ENCODE measurements at regions of chr10 and their contacts with region 1.

Region 1: DNA sequence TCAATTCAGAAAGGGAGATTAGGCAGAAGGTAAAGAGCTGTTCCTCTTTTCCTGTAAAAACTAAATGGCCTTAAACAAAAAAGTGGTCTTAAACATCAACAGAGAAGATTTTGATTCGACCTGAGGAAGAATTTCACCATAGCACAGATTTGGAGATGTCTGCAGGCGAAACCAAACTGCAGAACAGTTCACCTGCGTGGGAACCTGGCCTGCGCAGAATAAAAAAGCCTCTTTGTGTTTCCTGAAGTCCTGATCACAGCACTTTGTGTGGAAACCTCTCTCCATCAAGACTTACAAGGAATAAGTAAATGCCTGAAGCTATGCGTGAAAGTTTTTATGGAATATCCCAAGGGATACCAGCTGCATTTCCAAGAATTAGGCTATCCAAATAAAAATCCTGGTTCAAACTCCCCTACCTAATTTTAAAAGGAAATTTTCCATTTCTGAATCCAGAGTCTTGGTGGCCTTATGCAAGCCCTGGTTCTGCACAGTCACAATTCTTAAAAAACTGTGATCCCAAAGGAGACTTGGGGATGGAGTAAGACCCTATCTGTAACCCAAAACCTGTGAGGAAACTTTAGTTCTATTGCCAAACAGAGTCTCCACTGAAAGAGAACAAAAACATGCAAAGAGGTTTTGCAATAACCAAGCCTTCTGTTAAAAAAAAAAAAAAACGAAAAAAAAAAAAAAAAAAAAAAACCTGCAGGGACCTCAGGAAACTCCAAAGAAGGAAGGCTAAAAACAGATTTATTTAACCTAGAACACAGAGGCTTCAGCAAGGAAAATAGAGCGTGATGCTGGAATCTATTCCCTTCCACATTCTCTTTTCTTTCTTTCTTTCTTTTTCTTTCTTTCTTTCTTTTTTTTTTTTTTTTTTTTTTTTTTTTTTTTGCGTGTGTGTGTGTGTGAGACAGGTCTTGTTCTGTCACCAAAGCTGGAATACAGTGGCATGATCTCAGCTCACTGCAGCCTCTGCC is 10.4 kb downstream of the CALML3 start:
- DNase-seq: peak in 1 of 2 donors; percentile 66
- H3K4me3 ChIP-seq: no peak overlapping the region
- H3K27ac ChIP-seq: peak overlapping the region; percentile 86 to 87
- H3K4me1 ChIP-seq: peaks cover 10 to 65% of the 10 kb centered on the region in 2 donors
- H3K27me3 ChIP-seq: no peaks in the 10 kb centered on the region
- CTCF ChIP-seq: no peak

Region 2: DNA sequence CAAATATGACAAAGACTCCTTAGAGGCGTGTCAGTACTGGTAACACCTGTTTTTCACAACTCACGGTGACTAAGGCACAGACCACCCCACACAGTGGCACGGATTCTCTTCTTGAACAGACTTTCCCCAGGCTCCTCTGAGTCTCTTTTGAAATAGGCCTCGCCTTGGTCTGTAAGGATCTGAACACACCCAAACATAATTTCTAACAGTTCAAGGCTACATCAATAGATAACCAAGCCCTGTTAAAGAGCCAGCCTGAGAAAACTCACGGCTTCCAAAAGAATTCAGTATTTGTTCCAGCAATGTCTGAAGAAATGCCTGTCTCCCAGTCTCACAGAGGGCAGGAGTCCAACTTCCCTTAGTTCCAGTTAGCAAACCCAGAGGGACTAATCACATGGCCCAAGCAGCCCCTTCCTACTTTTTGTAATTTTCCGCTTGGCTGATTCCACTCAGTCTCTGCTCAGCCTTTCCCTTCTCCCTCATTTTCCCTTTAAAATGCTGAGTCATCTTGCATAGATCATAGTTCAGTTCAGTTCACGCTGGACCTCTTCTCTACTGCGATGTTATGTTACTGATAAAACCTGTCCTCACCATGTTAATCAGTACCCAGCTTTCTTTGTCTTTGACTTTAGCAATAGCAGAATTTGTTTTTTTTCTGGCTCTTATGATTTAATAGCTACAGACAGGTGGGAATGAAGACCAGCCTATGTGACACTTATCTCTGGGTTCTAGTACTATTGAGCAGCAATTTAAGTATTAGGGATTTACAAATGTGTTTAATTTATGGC is 463.6 kb before region 1 on chr10:
- intact Hi-C with region 1: loop called (anchors 10 kb)
- DNase-seq: peak; percentile 28 to 93
- H3K4me3 ChIP-seq: peak overlapping the region in 1 of 2 donors; percentile 24
- H3K27ac ChIP-seq: peak overlapping the region; percentile 90 to 93
- H3K4me1 ChIP-seq: peaks cover 8 to 23% of the 10 kb centered on the region in 2 donors
- H3K27me3 ChIP-seq: no peaks in the 10 kb centered on the region
- CTCF ChIP-seq: no peak

Region 3: GRCh38 chr10:5466418-5467154 is 68.6 kb before region 1 on chr10:
- intact Hi-C with region 1: loop called (anchors 5 kb)
- DNase-seq: no peak
- H3K4me3 ChIP-seq: no peak overlapping the region
- H3K27ac ChIP-seq: peak overlapping the region; percentile 71
- H3K4me1 ChIP-seq: peaks cover 0 to 16% of the 10 kb centered on the region in 2 donors
- H3K27me3 ChIP-seq: no peaks in the 10 kb centered on the region
- CTCF ChIP-seq: no peak

Region 4: GRCh38 chr10:5559642-5560141 is 24.5 kb after region 1 on chr10:
- intact Hi-C with region 1: loop called (anchors 2 kb)
- DNase-seq: peak in 1 of 2 donors; percentile 69
- H3K4me3 ChIP-seq: peak overlapping the region in 1 of 2 donors; percentile 20
- H3K27ac ChIP-seq: peak overlapping the region; percentile 82 to 91
- H3K4me1 ChIP-seq: peaks cover 35 to 72% of the 10 kb centered on the region in 2 donors
- H3K27me3 ChIP-seq: no peaks in the 10 kb centered on the region
- CTCF ChIP-seq: no peak

Region 5: DNA sequence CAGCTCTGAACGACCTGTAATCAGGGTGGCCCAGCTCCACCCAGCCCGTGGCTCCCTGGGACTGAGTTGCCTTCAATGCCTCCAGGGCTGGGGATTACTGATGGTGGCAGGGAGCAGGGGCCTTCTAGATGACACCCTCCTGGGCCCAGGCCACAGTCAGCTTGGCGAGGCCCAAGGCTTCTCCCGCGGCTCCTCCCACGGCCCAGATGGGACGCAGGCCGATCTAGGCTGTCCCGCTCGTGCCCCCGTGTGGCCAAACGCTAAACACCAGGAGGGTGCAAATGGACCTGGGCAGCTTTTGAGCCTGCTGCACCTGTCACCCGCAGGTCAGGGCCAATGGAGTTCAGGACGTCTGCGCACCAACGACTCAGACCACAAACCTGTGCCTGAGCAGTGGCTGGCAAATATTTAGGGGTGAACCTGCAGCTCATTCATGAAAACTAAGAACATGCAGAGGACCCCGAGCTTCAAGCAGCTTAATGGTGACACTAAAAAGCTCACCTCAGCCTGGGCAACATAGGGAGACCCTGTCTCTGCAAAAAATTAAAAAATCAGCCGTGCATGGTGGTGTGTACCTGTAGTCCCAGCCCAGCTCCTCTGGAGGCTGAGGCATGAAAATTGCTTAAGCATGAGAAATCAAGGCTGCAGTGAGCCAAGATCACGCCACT is 88.0 kb after region 1 on chr10:
- intact Hi-C with region 1: loop called (anchors 2 kb)
- DNase-seq: peak in 1 of 2 donors; percentile 93
- H3K4me3 ChIP-seq: no peak overlapping the region
- H3K27ac ChIP-seq: peak overlapping the region; percentile 52 to 65
- H3K4me1 ChIP-seq: peaks cover 12 to 51% of the 10 kb centered on the region in 2 donors
- H3K27me3 ChIP-seq: no peaks in the 10 kb centered on the region
- CTCF ChIP-seq: peak; percentile 91 to 93 (median 92)

Region 6: DNA sequence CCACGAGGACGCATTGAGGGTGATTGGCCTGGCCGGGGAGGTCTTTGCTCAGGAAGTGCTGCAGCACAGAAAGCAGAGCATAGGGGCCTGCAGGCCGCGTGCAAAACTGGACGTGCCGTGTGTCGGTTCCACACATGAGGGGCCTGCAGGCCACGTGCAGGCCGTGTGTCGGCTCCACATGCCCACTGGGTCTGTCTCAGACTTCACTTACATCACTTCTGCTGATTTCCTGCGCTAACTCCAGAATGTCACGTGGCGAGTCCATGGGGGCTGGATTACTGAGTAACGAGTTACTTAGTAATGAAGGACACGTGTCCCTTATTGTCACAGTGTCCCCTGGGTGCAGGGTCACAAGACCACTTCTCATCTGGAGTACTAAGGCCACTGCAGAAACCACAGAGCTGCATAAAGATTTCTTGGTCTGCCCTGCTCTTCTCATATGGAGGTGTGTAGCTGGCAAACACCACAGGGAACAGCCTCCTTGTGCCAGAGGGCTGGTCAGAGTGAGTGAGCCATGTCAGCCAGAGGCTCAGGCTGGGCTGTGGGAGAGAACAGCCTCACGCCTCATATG is 217.2 kb after region 1 on chr10:
- intact Hi-C with region 1: no loop called
- DNase-seq: no peak
- H3K4me3 ChIP-seq: no peak overlapping the region
- H3K27ac ChIP-seq: no peak overlapping the region
- H3K4me1 ChIP-seq: no peaks in the 10 kb centered on the region
- H3K27me3 ChIP-seq: no peaks in the 10 kb centered on the region
- CTCF ChIP-seq: no peak